ENCODE measurements at regions of chr19 and their contacts with region 1.

Region 1: GRCh38 chr19:28324275-28325060 is 888.5 kb downstream of the UQCRFS1 start:
- DNase-seq: no peak

Region 2: GRCh38 chr19:27974082-27974513 is 350.4 kb before region 1 on chr19:
- intact Hi-C with region 1: loop called (anchors 1 kb)
- DNase-seq: peak; percentile 21 to 92 (median 54)

Region 3: GRCh38 chr19:28242297-28242927 is 82.1 kb before region 1 on chr19:
- intact Hi-C with region 1: loop called (anchors 10 kb)
- DNase-seq: peak in 2 of 10 donors; percentile 8 to 38

Region 4: DNA sequence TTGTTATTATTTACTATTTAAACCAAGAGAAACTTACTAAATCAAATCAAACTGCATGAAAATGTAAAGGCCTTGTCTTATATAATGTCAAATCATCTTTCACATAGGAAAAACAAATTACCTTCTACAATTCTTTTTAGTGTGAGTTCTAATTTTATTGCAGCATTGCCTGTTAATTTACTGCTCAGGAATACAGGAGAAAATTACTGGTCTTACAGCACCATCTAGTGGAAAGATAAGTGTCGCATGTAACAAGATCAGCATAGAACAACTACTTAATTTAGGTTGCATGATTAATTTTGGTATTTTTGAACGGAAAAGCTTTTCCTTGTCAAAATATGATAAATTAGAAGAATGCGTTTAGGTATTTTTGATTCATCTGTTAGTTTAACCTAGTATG is 385.8 kb after region 1 on chr19:
- intact Hi-C with region 1: loop called (anchors 5 kb)
- DNase-seq: no peak

Measured in posterior cingulate gyrus (tissue), 11 donors.